GM12878 (cell line): ENCODE measurements at regions of chr10 and their contacts with region 1.

Region 1: DNA sequence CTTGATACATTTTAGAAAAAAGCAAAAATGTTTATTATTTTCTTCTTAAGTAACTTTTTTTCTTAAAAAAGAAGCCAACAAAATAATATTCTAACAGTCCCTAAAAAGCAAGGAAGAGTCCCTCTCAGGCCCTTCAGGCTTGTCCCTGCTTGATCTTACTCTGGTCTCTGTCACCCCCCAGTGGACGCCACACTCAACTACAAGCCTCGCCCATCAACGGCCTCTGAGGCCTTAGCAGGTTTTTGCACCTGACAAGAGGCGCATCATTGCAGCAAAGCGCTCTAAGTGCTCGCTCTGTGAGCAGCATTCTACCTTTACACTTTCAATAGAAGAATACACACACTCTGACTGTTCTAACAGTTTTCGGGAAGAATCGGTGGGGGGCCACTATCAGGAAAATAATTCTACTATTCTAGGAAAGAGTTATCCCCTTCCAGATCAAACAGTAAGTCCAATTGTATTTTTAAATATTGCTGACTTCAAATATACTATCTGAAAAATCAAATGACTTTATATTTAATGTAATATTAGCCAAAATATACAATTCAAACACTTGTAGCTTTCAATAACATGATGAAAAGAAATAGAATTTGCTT is 139.2 kb downstream of the USP6NL start:
- DNase-seq: no peak
- ATAC-seq: peak; percentile 99
- H3K4me3 ChIP-seq: no peak overlapping the region
- H3K27ac ChIP-seq: no peak overlapping the region
- H3K4me1 ChIP-seq: no peaks in the 10 kb centered on the region
- H3K27me3 ChIP-seq: no peaks in the 10 kb centered on the region
- CTCF ChIP-seq: peak; percentile 88 to 91 (median 90)
- EP300 ChIP-seq: no peak
- POLR2A ChIP-seq: no peak
- RAD21 ChIP-seq: peak; percentile 96

Region 2: DNA sequence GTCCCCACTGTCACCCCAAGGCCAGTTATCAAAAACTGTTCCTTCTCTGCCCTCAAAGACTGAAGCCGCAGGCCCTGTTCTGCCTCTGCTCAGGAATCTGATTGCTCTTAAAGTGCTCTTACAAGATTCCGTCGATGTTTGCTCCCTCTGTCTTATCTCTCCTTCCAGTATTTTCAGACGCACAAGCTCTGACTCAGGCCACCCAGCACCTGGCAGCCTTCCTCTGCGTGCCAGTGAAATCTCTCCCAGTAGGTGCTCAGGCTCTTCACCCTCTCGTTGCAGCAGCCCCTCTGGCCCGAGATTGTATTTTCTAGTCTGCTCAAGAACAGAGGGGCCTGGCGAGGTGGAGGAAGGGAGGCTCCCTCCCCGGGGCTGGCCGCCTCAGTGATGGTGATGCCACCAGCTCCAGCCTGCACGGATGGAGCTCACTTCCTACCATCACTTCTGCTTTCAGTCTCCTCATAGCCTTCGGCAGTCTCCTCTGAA is 137.0 kb before region 1 on chr10:
- CTCF ChIA-PET with region 1: no interaction called
- POLR2A ChIA-PET with region 1: no interaction called
- RAD21 ChIA-PET with region 1: no interaction called
- SMC1A ChIA-PET with region 1: no interaction called
- in situ Hi-C with region 1: no loop called
- intact Hi-C with region 1: loop called (anchors 10 kb)
- DNase-seq: no peak
- ATAC-seq: peak; percentile 35
- H3K4me3 ChIP-seq: no peak overlapping the region
- H3K27ac ChIP-seq: no peak overlapping the region
- H3K4me1 ChIP-seq: no peaks in the 10 kb centered on the region
- H3K27me3 ChIP-seq: no peaks in the 10 kb centered on the region
- CTCF ChIP-seq: no peak
- EP300 ChIP-seq: no peak
- POLR2A ChIP-seq: peak; percentile 54; the same call in 1 of the 2 replicates
- RAD21 ChIP-seq: no peak

Region 3: DNA sequence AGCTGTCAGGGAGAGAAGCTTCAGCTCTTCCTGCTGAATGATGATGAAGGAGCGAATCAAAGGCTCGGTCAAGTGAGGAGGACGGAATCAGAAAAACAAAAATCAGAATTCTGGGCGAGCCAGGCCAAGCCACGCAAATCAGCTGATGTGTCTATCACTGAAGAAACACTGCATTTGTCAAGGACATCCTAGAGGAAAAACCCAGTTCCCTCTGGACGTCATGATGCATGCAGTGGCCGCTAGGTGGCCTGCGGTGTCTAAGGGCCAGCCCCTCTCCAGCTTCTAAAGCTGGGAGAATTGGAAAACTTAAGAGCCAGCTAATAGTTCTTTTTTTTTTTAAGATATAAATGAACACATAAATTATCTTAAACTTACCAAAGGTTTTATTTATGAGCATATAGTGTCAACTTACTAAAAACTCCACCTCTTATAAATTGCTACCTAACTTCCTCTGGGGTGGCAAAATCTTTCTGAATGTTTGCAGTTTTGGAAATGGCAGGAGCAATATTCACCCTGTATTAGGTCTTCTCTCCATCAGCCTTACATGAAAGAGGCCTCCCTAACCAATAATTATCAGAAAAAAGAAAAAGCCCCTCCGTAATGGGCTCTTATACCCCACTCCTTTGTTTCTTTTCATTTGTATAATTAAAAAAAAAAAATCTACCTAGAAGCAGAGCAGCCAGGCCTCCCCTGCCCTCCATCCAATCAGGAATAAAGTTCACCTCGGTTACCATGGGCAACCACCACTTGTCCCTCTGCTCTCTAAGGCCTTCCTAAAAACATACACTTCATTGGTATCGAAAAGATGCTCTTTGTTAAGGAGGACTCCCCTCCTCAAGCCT is 47.6 kb before region 1 on chr10:
- CTCF ChIA-PET with region 1: interaction called, 7 read pairs
- POLR2A ChIA-PET with region 1: no interaction called
- RAD21 ChIA-PET with region 1: no interaction called
- SMC1A ChIA-PET with region 1: interaction called, 3 read pairs
- in situ Hi-C with region 1: no loop called
- intact Hi-C with region 1: loop called (anchors 1 kb)
- DNase-seq: no peak
- ATAC-seq: peak; percentile 91
- H3K4me3 ChIP-seq: no peak overlapping the region
- H3K27ac ChIP-seq: no peak overlapping the region
- H3K4me1 ChIP-seq: no peaks in the 10 kb centered on the region
- H3K27me3 ChIP-seq: no peaks in the 10 kb centered on the region; a peak in 1 of 4 replicates
- CTCF ChIP-seq: peak; percentile 79 to 91 (median 89)
- EP300 ChIP-seq: no peak
- POLR2A ChIP-seq: no peak
- RAD21 ChIP-seq: peak; percentile 79

Region 4: GRCh38 chr10:11434324-11434723 is 37.9 kb before region 1 on chr10:
- CTCF ChIA-PET with region 1: interaction called, 4 read pairs
- POLR2A ChIA-PET with region 1: no interaction called
- RAD21 ChIA-PET with region 1: interaction called, 4 read pairs
- SMC1A ChIA-PET with region 1: no interaction called
- in situ Hi-C with region 1: no loop called
- intact Hi-C with region 1: loop called (anchors 1 kb)
- DNase-seq: no peak
- ATAC-seq: peak; percentile 81
- H3K4me3 ChIP-seq: no peak overlapping the region
- H3K27ac ChIP-seq: no peak overlapping the region
- H3K4me1 ChIP-seq: no peaks in the 10 kb centered on the region
- H3K27me3 ChIP-seq: no peaks in the 10 kb centered on the region; a peak in 1 of 4 replicates
- CTCF ChIP-seq: peak; percentile 56 to 61 (median 61)
- EP300 ChIP-seq: no peak
- POLR2A ChIP-seq: no peak
- RAD21 ChIP-seq: peak; percentile 83

Region 5: DNA sequence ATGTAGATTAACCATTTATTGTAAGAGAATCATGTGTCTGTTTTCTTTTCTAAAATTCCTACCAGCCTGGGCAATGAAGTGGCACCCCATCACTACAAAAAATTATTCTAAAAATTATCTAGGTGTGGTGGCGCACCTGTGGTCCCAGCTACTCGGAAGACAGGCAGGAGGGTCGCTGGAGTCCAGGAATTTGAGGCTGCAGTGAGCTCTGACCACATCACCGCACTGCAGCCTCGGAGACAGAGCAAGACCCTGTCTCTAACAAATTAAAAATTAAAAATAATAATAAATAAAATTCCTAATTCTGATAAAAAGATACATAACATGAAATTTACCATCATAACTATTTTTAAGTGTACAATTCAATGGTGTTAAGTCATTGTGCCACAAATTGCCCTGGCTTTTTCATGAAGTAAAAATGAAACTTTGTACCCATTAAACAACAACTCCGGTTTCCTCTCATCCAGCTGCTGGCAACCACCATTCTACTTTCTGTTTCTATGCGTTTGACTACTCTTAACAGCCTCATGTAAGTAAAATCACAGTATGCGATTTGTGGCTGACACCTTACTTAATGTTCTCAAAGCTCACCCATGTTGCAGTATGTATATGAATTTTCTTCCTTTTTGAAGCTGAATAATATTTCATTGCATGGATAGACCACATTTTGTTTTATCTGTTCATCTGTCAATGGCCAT is 159.8 kb after region 1 on chr10:
- CTCF ChIA-PET with region 1: no interaction called
- POLR2A ChIA-PET with region 1: no interaction called
- RAD21 ChIA-PET with region 1: no interaction called
- SMC1A ChIA-PET with region 1: no interaction called
- in situ Hi-C with region 1: no loop called
- intact Hi-C with region 1: no loop called
- DNase-seq: peak; percentile 88
- ATAC-seq: peak; percentile 100
- H3K4me3 ChIP-seq: no peak overlapping the region
- H3K27ac ChIP-seq: peak overlapping the region; percentile 25; the same call in 1 of the 2 replicates
- H3K4me1 ChIP-seq: peaks cover 13% of the 10 kb centered on the region
- H3K27me3 ChIP-seq: no peaks in the 10 kb centered on the region
- CTCF ChIP-seq: no peak
- EP300 ChIP-seq: peak; percentile 66 to 73; a peak in 3 of 4 replicates
- POLR2A ChIP-seq: no peak
- RAD21 ChIP-seq: no peak